ENCODE measurements at regions of chr6 and their contacts with region 1.

Region 1: GRCh38 chr6:36929607-36930006 is 24.9 kb upstream of the PI16 start:
- DNase-seq: no peak
- H3K4me3 ChIP-seq: no peak overlapping the region
- H3K27ac ChIP-seq: no peak overlapping the region
- H3K4me1 ChIP-seq: peaks cover 0 to 4% of the 10 kb centered on the region in 2 donors
- H3K27me3 ChIP-seq: no peaks in the 10 kb centered on the region
- CTCF ChIP-seq: no peak

Region 2: DNA sequence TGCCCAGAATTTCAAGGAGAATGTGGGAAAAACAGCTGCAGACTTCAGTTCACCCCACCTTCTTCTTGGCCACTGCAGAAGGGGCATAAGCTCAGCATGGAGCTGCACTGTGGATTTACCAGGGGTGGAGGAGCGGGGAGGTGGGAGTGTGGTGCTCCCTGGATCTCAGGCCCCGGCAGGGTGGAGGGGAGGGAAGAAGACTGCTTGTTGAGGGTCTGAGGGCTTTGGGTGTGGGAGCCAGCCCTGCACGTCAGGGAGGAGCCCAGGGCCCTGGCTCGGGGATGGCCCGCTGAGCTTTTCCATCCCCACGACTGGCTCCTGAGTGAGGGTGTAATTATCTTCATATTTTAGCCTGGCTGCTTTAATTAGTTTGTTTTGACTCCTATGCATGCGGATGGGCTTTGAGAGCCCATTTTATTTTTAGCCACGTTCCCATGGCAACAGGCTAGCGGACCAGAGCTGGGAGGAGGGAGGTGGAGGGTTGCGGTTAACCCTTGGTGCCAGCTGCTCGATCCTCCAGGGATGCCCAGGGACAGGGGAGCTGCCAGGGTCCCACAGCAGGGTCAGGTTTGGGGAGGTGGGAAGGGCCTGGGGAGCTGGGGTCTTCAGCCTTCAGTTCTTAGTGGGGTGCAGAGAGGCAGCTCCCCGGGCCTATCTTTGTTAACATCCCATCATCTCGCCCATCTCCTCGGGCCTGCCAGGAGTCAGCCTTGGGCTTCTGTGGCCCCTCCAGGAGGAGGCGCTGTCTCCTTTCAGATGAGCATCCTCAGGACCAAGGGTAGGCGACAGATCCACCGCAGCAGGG is 163.8 kb before region 1 on chr6:
- intact Hi-C with region 1: no loop called
- DNase-seq: peak; percentile 33 to 89
- H3K4me3 ChIP-seq: no peak overlapping the region
- H3K27ac ChIP-seq: no peak overlapping the region
- H3K4me1 ChIP-seq: peaks cover 0 to 8% of the 10 kb centered on the region in 2 donors
- H3K27me3 ChIP-seq: no peaks in the 10 kb centered on the region
- CTCF ChIP-seq: peak; percentile 63 to 85 (median 82)

Region 3: GRCh38 chr6:36968266-36968977 is 38.8 kb after region 1 on chr6:
- intact Hi-C with region 1: loop called (anchors 5 kb)
- DNase-seq: no peak
- H3K4me3 ChIP-seq: no peak overlapping the region
- H3K27ac ChIP-seq: no peak overlapping the region
- H3K4me1 ChIP-seq: peaks cover 0 to 4% of the 10 kb centered on the region in 2 donors
- H3K27me3 ChIP-seq: no peaks in the 10 kb centered on the region
- CTCF ChIP-seq: no peak